Activated CD4-positive, alpha-beta T cell treated with anti-CD3 and anti-CD28 coated beads for 36 hours (primary cell): ENCODE measurements at regions of chr15 and their contacts with region 1.

Region 1: DNA sequence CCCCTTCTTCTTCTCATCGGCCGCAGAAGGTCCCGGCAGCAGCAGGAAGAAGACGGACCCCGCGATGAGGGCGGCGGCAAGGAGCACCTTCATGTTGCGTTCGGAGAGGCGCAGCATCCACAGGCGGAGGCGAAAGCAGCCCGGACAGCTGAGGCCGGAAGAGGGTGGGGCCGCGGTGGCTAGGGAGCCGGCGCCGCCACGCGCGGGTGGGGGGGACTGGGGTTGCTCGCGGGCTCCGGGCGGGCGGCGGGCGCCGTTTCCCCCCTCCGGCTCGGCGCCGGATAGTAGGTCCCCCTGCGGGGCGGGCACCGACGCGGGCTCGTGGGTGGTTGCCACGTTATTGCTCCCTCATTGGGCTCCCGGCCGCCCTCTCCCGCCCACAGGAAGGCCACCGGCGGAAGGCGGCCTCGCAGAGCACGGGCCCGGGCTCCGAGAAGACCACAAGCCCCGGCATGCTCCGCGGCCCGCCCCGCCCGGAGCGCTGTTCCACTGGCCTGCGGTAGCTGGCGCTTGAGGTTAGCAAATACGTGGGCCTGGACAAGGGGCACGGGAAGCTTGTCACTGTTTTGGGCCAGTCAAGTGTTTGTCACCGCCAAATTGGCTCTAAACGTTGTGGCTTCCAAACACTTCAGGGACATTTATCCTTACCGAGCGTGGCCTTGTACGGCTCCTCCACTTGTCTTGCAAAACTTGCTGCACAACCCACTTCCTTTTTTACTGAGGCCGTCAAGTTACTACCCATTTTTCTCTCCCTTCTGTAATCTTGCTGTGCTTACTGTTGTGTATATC is at the start of gene PPIB:
- DNase-seq: peak; percentile 99
- ATAC-seq: peak; percentile 94
- H3K4me3 Mint-ChIP-seq: peak within 1 kb of the TSS; percentile 86
- H3K27ac Mint-ChIP-seq: peak within 1 kb of the TSS; percentile 100
- H3K4me1 Mint-ChIP-seq: peaks cover 47% of the 10 kb centered on the region
- H3K27me3 Mint-ChIP-seq: no peaks in the 10 kb centered on the region
- total RNA-seq, gene PPIB: 221 to 233 TPM

Region 2: DNA sequence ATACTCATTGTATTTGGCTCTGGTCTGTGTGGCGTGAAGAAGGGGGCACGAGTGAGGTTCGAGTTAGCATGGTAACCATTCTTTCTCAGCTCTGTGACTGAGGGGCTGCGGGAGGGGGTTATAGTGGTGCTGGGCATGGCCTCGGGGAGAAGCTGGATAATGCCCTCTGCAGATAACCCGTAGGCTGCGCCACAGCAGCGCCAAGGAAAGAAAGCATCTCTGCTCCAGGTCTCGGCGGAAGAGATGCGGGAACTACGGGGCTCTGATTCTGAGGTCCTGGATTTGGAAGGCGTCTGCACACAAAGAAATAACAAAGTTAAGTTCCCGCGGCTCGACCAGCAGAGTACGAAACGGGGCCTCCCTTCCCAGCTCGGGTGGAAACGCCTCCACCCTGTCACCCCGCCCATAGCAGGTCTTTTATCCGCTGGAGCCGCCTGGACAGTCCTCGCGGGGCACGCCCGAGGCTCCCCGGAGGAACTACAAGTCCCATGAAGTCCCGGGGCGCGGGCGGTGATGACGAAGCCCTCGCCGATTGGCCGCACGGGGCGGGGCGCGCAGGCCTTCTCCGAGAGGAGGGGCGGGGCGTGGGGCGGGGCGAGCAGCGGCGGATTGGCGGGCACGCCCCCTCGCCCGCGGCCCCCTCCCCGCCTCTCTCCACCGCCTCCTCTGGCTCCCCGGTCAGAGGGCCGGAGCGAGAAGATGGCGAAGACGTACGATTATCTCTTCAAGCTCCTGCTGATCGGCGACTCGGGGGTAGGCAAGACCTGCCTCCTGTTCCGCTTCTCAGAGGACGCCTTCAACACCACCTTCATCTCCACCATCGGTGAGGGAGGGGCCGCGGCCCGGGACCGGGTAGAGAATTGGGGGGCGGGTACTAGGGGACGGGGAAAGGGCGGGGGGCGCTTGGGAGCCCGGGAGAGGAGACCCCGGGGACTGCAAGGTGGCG is 973.9 kb before region 1 on chr15 and contains the start of gene RAB8B:
- CTCF ChIA-PET with region 1: no interaction called
- POLR2A ChIA-PET with region 1: no interaction called
- intact Hi-C with region 1: loop called in 1 of 2 experiments (anchors 5 kb)
- DNase-seq: peak; percentile 100
- ATAC-seq: peak; percentile 76
- H3K4me3 Mint-ChIP-seq: peak within 1 kb of the TSS; percentile 99
- H3K27ac Mint-ChIP-seq: peak within 1 kb of the TSS; percentile 97
- H3K4me1 Mint-ChIP-seq: peaks cover 39% of the 10 kb centered on the region
- H3K27me3 Mint-ChIP-seq: no peaks in the 10 kb centered on the region
- total RNA-seq, gene RAB8B: 147 to 260 TPM

Region 3: GRCh38 chr15:64187396-64188191 is 24.5 kb after region 1 on chr15:
- CTCF ChIA-PET with region 1: interaction called, 3 read pairs
- POLR2A ChIA-PET with region 1: no interaction called
- intact Hi-C with region 1: loop called in 1 of 2 experiments (anchors 1 kb)
- DNase-seq: no peak
- ATAC-seq: peak; percentile 37
- H3K4me3 Mint-ChIP-seq: peak overlapping the region; percentile 39
- H3K27ac Mint-ChIP-seq: peak overlapping the region; percentile 80
- H3K4me1 Mint-ChIP-seq: peaks cover 13% of the 10 kb centered on the region
- H3K27me3 Mint-ChIP-seq: no peaks in the 10 kb centered on the region

Region 4: GRCh38 chr15:64381000-64381752 is 218.1 kb after region 1 on chr15 and contains the start of gene PCLAF:
- CTCF ChIA-PET with region 1: no interaction called
- POLR2A ChIA-PET with region 1: no interaction called
- intact Hi-C with region 1: loop called (anchors 1 to 2 kb)
- DNase-seq: peak; percentile 97
- ATAC-seq: peak; percentile 99
- H3K4me3 Mint-ChIP-seq: peak within 1 kb of the TSS; percentile 97
- H3K27ac Mint-ChIP-seq: peak within 1 kb of the TSS; percentile 84
- H3K4me1 Mint-ChIP-seq: peaks cover 18% of the 10 kb centered on the region
- H3K27me3 Mint-ChIP-seq: no peaks in the 10 kb centered on the region
- total RNA-seq, gene PCLAF: 41.4 to 97.6 TPM

Region 5: GRCh38 chr15:64597477-64597822 is 434.4 kb after region 1 on chr15:
- CTCF ChIA-PET with region 1: no interaction called
- POLR2A ChIA-PET with region 1: no interaction called
- intact Hi-C with region 1: no loop called
- DNase-seq: no peak
- ATAC-seq: no peak
- H3K4me3 Mint-ChIP-seq: peak overlapping the region; percentile 66
- H3K27ac Mint-ChIP-seq: peak overlapping the region; percentile 91
- H3K4me1 Mint-ChIP-seq: peaks cover 60% of the 10 kb centered on the region
- H3K27me3 Mint-ChIP-seq: no peaks in the 10 kb centered on the region

Region 6: GRCh38 chr15:64702816-64703646 is 540.0 kb after region 1 on chr15:
- CTCF ChIA-PET with region 1: no interaction called
- POLR2A ChIA-PET with region 1: no interaction called
- intact Hi-C with region 1: loop called in 1 of 2 experiments (anchors 1 kb)
- DNase-seq: peak; percentile 98
- ATAC-seq: peak; percentile 91
- H3K4me3 Mint-ChIP-seq: peak overlapping the region; percentile 72
- H3K27ac Mint-ChIP-seq: peak overlapping the region; percentile 86
- H3K4me1 Mint-ChIP-seq: peaks cover 52% of the 10 kb centered on the region
- H3K27me3 Mint-ChIP-seq: no peaks in the 10 kb centered on the region

Region 7: DNA sequence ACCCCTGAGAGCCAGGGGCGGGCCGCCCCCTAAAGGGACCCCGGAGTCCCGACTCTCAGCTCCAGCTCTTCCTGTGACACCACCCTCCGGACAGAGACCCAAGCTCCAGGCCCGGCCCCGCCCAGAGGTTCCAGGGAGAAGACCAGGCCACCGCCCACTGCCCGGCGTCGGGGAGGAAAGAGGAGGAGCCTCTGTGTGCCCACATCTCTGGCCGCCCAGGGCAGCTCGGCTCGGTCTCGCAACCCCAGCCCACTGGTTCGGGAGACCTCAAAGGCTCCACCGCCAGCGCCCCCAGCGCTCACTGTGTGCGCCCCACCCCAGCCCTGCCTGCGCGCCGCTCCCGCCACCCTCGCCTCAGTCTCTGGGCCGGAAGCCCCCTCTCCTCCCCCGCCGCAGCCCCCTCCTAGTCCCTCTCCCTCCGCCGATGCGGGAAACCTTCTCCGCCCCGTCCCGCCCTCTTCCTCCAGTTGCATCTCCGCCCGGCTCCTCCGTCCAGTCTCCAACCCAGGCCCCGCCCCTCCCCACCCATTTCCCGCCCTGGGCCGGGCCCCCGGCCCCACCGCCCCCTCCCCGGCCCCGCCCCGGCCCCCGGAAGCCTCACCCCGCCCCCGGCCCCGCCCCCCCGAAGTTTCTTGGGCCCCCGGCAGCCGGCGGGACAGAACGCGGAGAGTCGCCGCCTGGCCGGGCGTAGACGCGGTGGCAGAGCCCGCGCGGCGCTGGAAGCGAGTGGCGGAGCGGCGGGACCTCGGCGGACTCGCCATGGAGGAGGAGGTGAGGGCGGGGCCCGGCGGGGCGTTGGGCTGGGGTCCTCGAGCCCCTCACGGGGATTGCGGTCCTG is 678.4 kb after region 1 on chr15 and contains the start of gene PLEKHO2:
- CTCF ChIA-PET with region 1: no interaction called
- POLR2A ChIA-PET with region 1: no interaction called
- intact Hi-C with region 1: loop called in 1 of 2 experiments (anchors 2 kb)
- DNase-seq: peak; percentile 94
- ATAC-seq: peak; percentile 73
- H3K4me3 Mint-ChIP-seq: peak within 1 kb of the TSS; percentile 88
- H3K27ac Mint-ChIP-seq: peak within 1 kb of the TSS; percentile 84
- H3K4me1 Mint-ChIP-seq: peaks cover 66% of the 10 kb centered on the region
- H3K27me3 Mint-ChIP-seq: no peaks in the 10 kb centered on the region
- total RNA-seq, gene PLEKHO2: 11.4 to 13.3 TPM

Region 8: GRCh38 chr15:65184868-65185738 is 1022.0 kb after region 1 on chr15 and contains the start of gene CLPX:
- CTCF ChIA-PET with region 1: no interaction called
- POLR2A ChIA-PET with region 1: no interaction called
- intact Hi-C with region 1: loop called in 1 of 2 experiments (anchors 1 kb)
- DNase-seq: peak; percentile 95
- ATAC-seq: peak; percentile 93
- H3K4me3 Mint-ChIP-seq: peak within 1 kb of the TSS; percentile 92
- H3K27ac Mint-ChIP-seq: peak within 1 kb of the TSS; percentile 89
- H3K4me1 Mint-ChIP-seq: peaks cover 28% of the 10 kb centered on the region
- H3K27me3 Mint-ChIP-seq: no peaks in the 10 kb centered on the region
- total RNA-seq, gene CLPX: 65.2 to 73.7 TPM